Activated CD4-positive, alpha-beta T cell treated with anti-CD3 and anti-CD28 coated beads for 36 hours (primary cell): ENCODE measurements at regions of chr16 and their contacts with region 1.

Region 1: GRCh38 chr16:71845639-71846430 is at the start of gene ATXN1L:
- DNase-seq: peak; percentile 95
- ATAC-seq: peak; percentile 82
- H3K4me3 Mint-ChIP-seq: peak within 1 kb of the TSS; percentile 87
- H3K27ac Mint-ChIP-seq: peak within 1 kb of the TSS; percentile 93
- H3K4me1 Mint-ChIP-seq: peaks cover 43% of the 10 kb centered on the region
- H3K27me3 Mint-ChIP-seq: no peaks in the 10 kb centered on the region
- total RNA-seq, gene ATXN1L: 15.4 to 16.9 TPM

Region 2: DNA sequence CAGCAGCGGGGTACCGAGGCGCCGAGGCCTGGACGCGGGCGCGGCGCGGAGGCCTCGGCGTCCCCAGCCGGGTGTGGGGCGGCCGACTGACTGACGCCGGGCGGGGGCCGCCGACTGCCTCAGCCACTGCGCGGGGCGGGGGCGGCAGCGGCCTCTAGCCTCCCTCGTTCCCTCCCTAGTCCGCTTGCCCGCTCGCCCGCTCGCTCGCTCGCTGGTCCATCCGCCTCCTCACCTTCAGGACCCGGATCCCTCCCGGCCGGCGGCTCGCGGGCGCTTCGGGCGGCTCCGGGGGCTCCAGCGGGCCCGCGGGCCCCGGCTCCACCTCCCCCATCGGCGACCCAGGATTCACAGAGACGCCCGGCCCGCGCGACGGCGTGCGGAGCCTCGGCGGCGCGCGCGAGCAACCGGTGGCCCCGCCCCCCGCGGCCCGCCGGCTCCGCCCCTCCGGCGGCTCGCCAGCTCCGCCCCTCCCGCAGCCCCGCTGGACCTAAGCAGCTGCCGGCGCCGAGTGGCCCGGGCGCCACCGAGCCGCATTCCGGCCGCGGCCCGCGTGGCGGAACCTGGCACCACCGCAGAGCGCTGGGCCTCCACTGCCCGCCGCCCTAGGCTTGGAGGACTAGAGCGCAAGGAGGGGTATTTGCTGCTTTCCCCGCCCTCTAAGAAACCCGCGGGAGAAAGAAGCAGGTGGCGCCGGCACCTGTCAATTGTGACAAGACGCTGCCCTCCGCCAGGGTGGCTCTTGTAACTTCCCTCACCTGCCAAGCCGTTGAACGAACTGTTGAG is 122.1 kb before region 1 on chr16:
- CTCF ChIA-PET with region 1: no interaction called
- POLR2A ChIA-PET with region 1: no interaction called
- intact Hi-C with region 1: loop called in 1 of 2 experiments (anchors 1 kb)
- DNase-seq: peak; percentile 87
- ATAC-seq: peak; percentile 87
- H3K4me3 Mint-ChIP-seq: peak overlapping the region; percentile 95
- H3K27ac Mint-ChIP-seq: peak overlapping the region; percentile 68
- H3K4me1 Mint-ChIP-seq: peaks cover 16% of the 10 kb centered on the region
- H3K27me3 Mint-ChIP-seq: no peaks in the 10 kb centered on the region

Region 3: GRCh38 chr16:71794943-71795342 is 50.9 kb before region 1 on chr16:
- CTCF ChIA-PET with region 1: no interaction called
- POLR2A ChIA-PET with region 1: no interaction called
- intact Hi-C with region 1: loop called in 1 of 2 experiments (anchors 1 kb)
- DNase-seq: no peak
- ATAC-seq: peak; percentile 60
- H3K4me3 Mint-ChIP-seq: no peak overlapping the region
- H3K27ac Mint-ChIP-seq: peak overlapping the region; percentile 34
- H3K4me1 Mint-ChIP-seq: peaks cover 63% of the 10 kb centered on the region
- H3K27me3 Mint-ChIP-seq: no peaks in the 10 kb centered on the region

Region 4: DNA sequence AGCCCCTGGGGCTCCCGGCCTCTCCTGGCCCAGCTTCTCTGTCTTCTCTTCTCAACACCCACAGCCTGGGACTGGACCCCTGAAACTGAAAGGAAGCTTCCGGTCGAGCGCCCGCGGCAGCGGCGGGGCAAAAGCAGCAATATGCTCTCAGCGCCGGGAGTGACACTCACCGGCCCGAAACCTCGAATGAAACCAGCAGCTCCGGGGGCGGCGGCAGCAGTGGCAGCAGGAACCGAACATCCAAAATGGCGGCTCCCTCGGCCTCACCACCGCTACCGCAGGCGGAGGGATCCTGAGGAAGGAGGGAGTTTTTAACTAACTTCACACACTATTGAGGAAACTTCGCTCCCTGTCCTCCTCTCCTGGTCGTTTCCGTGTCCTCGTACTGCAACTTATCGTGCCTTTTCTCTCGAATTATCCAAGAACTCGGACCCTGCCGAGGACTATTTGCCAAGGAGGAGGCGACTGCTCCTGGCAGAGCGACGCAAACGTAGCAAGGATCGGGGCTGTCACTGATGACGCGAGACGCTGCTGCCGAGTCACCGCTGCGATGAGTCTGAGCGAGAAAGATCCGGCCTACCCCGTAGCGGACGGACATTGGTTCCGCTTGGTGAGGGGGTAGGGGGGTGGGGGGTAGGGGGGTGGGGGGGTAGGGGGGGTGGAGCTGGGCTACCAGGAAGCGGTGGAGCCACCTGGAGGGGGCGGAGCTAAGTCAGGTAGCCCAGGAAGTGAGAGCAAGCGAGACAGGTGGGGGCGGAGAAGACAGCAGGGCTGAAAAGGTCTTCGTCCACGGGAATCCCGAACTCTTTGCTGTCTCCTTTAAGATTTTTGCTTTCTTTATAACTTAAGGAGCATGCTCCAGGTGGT is 37.0 kb before region 1 on chr16 and contains the start of gene AP1G1:
- CTCF ChIA-PET with region 1: interaction called, 4 read pairs
- POLR2A ChIA-PET with region 1: interaction called, 4 read pairs
- intact Hi-C with region 1: loop called (anchors 1 kb)
- DNase-seq: peak; percentile 96
- ATAC-seq: peak; percentile 92
- H3K4me3 Mint-ChIP-seq: peak within 1 kb of the TSS; percentile 91
- H3K27ac Mint-ChIP-seq: peak within 1 kb of the TSS; percentile 100
- H3K4me1 Mint-ChIP-seq: peaks cover 48% of the 10 kb centered on the region
- H3K27me3 Mint-ChIP-seq: no peaks in the 10 kb centered on the region
- total RNA-seq, gene AP1G1: 65.5 to 68.8 TPM

Region 5: DNA sequence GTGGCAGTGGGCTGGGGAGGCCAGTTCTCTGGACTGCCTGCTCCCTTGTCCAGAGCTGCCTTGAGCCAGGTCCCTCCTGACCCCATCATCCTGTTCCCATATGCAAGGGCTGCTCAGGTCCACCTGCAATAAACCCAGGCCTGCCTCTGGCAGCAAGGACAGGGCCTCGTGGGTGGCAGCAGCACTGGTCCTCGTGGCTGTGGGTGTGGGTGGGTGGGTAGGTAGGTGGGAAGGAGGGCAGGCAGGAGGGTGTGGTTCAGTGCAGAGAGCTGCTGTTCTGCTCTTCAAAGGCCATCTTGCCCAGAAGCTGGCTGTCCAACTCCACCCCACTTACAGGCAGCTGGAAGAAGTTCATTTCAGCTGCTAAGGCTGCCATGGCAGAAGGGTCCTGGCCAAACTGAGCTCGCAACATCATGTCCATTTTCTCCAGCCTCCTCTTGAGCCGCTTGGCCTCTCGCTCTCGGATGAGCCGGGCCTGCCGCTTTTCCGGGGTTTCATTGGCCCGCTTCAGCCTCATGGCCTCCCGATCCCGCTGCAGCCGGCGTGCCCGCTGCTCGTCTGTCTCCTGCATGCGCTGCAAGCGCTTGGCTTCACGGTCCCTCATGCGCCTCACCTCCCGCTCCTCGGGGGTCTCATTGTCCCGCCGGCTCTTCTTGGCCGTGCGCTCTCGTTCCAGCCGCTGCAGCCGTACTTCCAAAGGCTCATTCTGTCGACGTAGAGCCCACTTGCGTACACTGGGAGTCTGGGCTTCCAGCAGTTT is 14.1 kb after region 1 on chr16:
- CTCF ChIA-PET with region 1: no interaction called
- POLR2A ChIA-PET with region 1: interaction called, 7 read pairs
- intact Hi-C with region 1: loop called in 1 of 2 experiments (anchors 1 kb)
- DNase-seq: no peak
- ATAC-seq: no peak
- H3K4me3 Mint-ChIP-seq: no peak overlapping the region
- H3K27ac Mint-ChIP-seq: no peak overlapping the region
- H3K4me1 Mint-ChIP-seq: peaks cover 28% of the 10 kb centered on the region
- H3K27me3 Mint-ChIP-seq: no peaks in the 10 kb centered on the region

Region 6: GRCh38 chr16:71865173-71865863 is 19.5 kb after region 1 on chr16:
- CTCF ChIA-PET with region 1: no interaction called
- POLR2A ChIA-PET with region 1: interaction called, 7 read pairs
- intact Hi-C with region 1: loop called in 1 of 2 experiments (anchors 1 kb)
- DNase-seq: no peak
- ATAC-seq: peak; percentile 82
- H3K4me3 Mint-ChIP-seq: no peak overlapping the region
- H3K27ac Mint-ChIP-seq: peak overlapping the region; percentile 55
- H3K4me1 Mint-ChIP-seq: peaks cover 22% of the 10 kb centered on the region
- H3K27me3 Mint-ChIP-seq: no peaks in the 10 kb centered on the region

Region 7: DNA sequence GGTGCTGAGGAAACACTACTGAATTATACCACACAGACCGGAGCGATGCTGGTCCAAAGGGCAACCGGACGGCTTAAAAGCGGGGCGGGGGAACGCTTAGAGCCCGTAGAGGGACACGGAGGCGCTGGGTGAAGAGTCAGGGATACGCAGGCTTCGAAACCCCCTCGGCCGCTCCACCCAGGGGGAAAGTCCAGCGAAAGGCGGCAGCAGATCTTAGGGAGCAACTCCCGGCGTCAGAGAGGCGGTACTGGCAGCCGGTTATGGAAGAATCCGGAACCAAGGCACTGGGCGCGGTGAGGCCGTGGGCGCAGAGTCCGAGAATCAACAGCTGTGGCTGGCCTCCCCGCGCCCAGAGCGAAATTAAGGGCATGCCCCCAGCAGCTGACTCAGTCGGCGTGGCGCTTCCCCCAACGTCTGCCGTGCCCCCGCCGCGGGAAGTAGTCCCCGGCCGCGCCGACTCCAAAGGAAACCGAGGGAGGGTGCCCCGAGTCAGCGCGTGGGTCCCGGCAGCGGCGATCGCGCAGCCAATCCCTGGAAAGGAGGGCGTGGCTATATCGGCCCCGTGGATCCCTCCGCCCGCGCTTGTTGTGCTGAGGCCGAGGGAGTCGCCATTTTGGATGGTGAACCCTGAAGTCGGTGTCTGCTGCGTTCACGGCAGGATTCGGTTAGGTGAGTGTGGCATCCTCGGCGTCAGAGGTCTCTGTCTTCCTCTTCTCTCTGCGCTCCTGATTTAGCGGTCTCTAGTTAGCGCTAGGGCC is 49.3 kb after region 1 on chr16 and contains the start of gene IST1:
- CTCF ChIA-PET with region 1: interaction called, 3 read pairs
- POLR2A ChIA-PET with region 1: no interaction called
- intact Hi-C with region 1: loop called (anchors 1 to 2 kb)
- DNase-seq: peak; percentile 99
- ATAC-seq: peak; percentile 92
- H3K4me3 Mint-ChIP-seq: peak within 1 kb of the TSS; percentile 96
- H3K27ac Mint-ChIP-seq: peak within 1 kb of the TSS; percentile 94
- H3K4me1 Mint-ChIP-seq: peaks cover 31% of the 10 kb centered on the region
- H3K27me3 Mint-ChIP-seq: no peaks in the 10 kb centered on the region
- total RNA-seq, gene IST1: 170 to 179 TPM